SK-N-SH (cell line): ENCODE measurements at regions of chr17 and their contacts with region 1.

Region 1: GRCh38 chr17:63425482-63425881 is 20.6 kb downstream of the CYB561 start:
- DNase-seq: peak; percentile 90
- H3K4me3 ChIP-seq: no peak overlapping the region; a peak in 1 of 4 replicates
- H3K27ac ChIP-seq: peak overlapping the region in 1 of 2 experiments; percentile 77; a peak in 2 of 4 replicates
- H3K4me1 ChIP-seq: peaks cover 0 to 48% of the 10 kb centered on the region in 2 experiments; a peak in 2 of 4 replicates
- H3K27me3 ChIP-seq: no peaks in the 10 kb centered on the region
- CTCF ChIP-seq: peak; percentile 100
- EP300 ChIP-seq: peak in 1 of 2 experiments; percentile 50; a peak in 1 of 4 replicates
- RAD21 ChIP-seq: peak; percentile 100

Region 2: GRCh38 chr17:63082273-63082993 is 343.0 kb before region 1 on chr17:
- CTCF ChIA-PET with region 1: interaction called, 14 read pairs
- POLR2A ChIA-PET with region 1: no interaction called
- DNase-seq: peak; percentile 19
- H3K4me3 ChIP-seq: no peak overlapping the region
- H3K27ac ChIP-seq: peak overlapping the region; percentile 59 to 62
- H3K4me1 ChIP-seq: peaks cover 7 to 20% of the 10 kb centered on the region in 2 experiments; a peak in 3 of 4 replicates
- H3K27me3 ChIP-seq: no peaks in the 10 kb centered on the region
- CTCF ChIP-seq: peak; percentile 85
- EP300 ChIP-seq: no peak
- RAD21 ChIP-seq: peak; percentile 87

Region 3: DNA sequence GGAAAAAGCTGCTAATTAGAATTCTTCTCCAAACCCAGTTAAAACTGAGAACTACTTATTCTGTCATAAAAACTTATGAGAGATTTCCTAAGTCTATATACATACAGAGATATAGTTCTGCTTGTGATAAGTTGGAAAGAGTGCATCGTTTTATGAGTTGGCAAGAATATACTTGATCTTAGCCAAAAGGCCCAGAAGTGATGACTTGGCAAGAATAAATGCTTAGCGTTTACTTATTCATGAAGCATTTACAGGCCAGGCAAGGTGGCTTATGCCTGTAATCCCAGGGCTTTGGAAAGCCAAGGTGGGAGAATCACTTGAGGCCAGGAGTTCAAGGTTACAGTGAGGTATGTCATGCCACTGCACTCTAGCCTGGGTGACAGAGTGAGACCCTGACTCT is 61.1 kb before region 1 on chr17:
- CTCF ChIA-PET with region 1: no interaction called
- POLR2A ChIA-PET with region 1: no interaction called
- DNase-seq: no peak
- H3K4me3 ChIP-seq: no peak overlapping the region
- H3K27ac ChIP-seq: peak overlapping the region in 1 of 2 experiments; percentile 84; a peak in 2 of 4 replicates
- H3K4me1 ChIP-seq: peaks cover 11 to 52% of the 10 kb centered on the region in 2 experiments
- H3K27me3 ChIP-seq: no peaks in the 10 kb centered on the region
- CTCF ChIP-seq: no peak
- EP300 ChIP-seq: no peak
- RAD21 ChIP-seq: no peak

Region 4: DNA sequence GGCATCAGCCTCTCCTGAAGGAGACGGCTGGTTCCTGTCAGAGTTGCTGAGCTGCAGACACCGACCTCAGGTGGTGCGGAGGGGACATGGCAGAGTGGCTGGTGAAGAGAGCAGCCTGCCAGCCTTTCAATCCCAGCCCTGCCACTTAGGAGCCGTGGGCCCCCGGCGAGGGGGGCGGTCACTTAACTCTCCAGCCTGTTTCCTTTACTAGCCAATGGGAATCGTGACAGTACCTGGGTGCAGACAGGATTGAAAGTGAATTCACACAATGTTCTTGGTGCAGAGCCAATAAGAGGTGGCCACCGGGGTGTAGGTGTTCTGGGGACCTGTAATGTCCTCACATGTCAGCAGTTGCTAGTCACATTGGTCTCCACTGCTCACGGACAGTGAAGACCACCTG is 64.8 kb after region 1 on chr17:
- CTCF ChIA-PET with region 1: interaction called, 30 read pairs
- POLR2A ChIA-PET with region 1: no interaction called
- DNase-seq: no peak
- H3K4me3 ChIP-seq: no peak overlapping the region
- H3K27ac ChIP-seq: no peak overlapping the region
- H3K4me1 ChIP-seq: peaks cover 0 to 1% of the 10 kb centered on the region in 2 experiments; a peak in 1 of 4 replicates
- H3K27me3 ChIP-seq: no peaks in the 10 kb centered on the region
- CTCF ChIP-seq: no peak
- EP300 ChIP-seq: no peak
- RAD21 ChIP-seq: no peak

Region 5: GRCh38 chr17:63542942-63543821 is 117.7 kb after region 1 on chr17:
- CTCF ChIA-PET with region 1: interaction called, 12 read pairs
- POLR2A ChIA-PET with region 1: interaction called, 3 read pairs
- DNase-seq: peak; percentile 44
- H3K4me3 ChIP-seq: no peak overlapping the region
- H3K27ac ChIP-seq: no peak overlapping the region
- H3K4me1 ChIP-seq: peaks cover 0 to 32% of the 10 kb centered on the region in 2 experiments; a peak in 1 of 4 replicates
- H3K27me3 ChIP-seq: peaks cover 11% of the 10 kb centered on the region; the same call in 1 of the 2 replicates
- CTCF ChIP-seq: no peak
- EP300 ChIP-seq: no peak
- RAD21 ChIP-seq: no peak

Region 6: DNA sequence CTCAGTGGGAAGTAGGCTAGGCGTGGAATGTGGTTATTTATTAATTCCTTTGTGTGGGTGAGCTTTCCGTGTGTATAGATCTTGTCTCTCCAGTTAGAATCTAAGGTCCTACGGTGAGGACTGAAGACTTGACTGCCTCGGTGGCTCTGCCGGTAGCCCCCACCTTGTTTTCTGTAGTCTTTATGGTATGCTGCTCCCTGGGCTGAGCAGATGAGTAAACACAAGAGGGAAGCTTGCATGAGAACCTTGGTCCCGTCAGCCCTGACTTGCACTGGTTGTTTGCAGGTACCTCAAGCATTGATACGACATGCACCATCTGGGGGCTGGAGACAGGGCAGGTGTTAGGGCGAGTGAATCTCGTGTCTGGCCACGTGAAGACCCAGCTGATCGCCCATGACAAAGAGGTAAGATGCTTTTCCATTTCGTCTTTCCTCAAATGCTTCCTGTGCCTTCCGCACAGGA is 154.1 kb after region 1 on chr17:
- CTCF ChIA-PET with region 1: interaction called, 54 read pairs
- POLR2A ChIA-PET with region 1: no interaction called
- DNase-seq: no peak
- H3K4me3 ChIP-seq: no peak overlapping the region
- H3K27ac ChIP-seq: no peak overlapping the region
- H3K4me1 ChIP-seq: no peaks in the 10 kb centered on the region; a peak in 1 of 4 replicates
- H3K27me3 ChIP-seq: no peaks in the 10 kb centered on the region
- CTCF ChIP-seq: no peak
- EP300 ChIP-seq: no peak
- RAD21 ChIP-seq: no peak

Region 7: DNA sequence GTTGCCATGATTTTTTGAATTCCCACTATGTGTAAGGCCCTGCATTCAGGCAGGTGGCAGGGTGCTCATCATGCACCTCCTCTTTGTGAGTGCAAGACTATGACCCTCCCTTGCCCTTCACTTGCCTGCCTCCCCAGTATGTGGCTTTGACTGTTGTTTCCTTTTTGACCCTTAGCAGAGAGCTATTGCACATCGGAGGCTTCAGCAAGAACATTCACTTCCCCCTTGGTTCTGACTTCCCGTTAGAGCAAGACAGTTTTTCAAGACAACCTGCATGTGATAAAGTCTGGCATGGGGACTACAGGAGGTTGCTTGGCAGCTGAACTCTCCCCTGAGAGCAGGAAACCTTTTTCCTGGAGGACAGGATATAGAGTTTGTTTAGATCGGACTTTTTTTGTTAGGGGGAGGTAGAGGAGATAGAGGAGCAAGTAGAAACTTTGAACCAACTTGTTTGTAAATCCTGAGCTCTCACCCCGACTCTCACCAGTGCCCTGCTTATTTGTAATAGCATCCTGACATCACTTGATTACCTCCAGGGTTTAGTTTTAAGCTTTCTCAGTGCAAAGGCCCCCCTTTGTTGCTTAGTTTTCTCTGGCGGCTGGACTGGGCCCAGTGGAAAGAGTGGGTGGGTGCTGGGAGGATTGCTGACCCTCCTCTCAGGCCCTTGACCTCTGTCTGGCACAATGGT is 240.2 kb after region 1 on chr17:
- CTCF ChIA-PET with region 1: interaction called, 12 read pairs
- POLR2A ChIA-PET with region 1: no interaction called
- DNase-seq: no peak
- H3K4me3 ChIP-seq: no peak overlapping the region
- H3K27ac ChIP-seq: no peak overlapping the region
- H3K4me1 ChIP-seq: no peaks in the 10 kb centered on the region
- H3K27me3 ChIP-seq: no peaks in the 10 kb centered on the region
- CTCF ChIP-seq: no peak
- EP300 ChIP-seq: no peak
- RAD21 ChIP-seq: no peak

Region 8: GRCh38 chr17:63709098-63709497 is 283.6 kb after region 1 on chr17:
- CTCF ChIA-PET with region 1: interaction called, 16 read pairs
- POLR2A ChIA-PET with region 1: no interaction called
- DNase-seq: no peak
- H3K4me3 ChIP-seq: no peak overlapping the region
- H3K27ac ChIP-seq: no peak overlapping the region
- H3K4me1 ChIP-seq: peaks cover 0 to 8% of the 10 kb centered on the region in 2 experiments; a peak in 1 of 4 replicates
- H3K27me3 ChIP-seq: no peaks in the 10 kb centered on the region
- CTCF ChIP-seq: no peak
- EP300 ChIP-seq: no peak
- RAD21 ChIP-seq: no peak